IMR-90 (cell line): ENCODE measurements at regions of chr1 and their contacts with region 1.

Region 1: GRCh38 chr1:234702342-234703000 is 92.5 kb upstream of the IRF2BP2 start:
- DNase-seq: no peak
- ATAC-seq: no peak
- H3K4me3 ChIP-seq: no peak overlapping the region
- H3K27ac ChIP-seq: no peak overlapping the region
- H3K4me1 ChIP-seq: peaks cover 13% of the 10 kb centered on the region
- H3K27me3 ChIP-seq: no peaks in the 10 kb centered on the region
- CTCF ChIP-seq: no peak
- POLR2A ChIP-seq: no peak
- RAD21 ChIP-seq: no peak

Region 2: DNA sequence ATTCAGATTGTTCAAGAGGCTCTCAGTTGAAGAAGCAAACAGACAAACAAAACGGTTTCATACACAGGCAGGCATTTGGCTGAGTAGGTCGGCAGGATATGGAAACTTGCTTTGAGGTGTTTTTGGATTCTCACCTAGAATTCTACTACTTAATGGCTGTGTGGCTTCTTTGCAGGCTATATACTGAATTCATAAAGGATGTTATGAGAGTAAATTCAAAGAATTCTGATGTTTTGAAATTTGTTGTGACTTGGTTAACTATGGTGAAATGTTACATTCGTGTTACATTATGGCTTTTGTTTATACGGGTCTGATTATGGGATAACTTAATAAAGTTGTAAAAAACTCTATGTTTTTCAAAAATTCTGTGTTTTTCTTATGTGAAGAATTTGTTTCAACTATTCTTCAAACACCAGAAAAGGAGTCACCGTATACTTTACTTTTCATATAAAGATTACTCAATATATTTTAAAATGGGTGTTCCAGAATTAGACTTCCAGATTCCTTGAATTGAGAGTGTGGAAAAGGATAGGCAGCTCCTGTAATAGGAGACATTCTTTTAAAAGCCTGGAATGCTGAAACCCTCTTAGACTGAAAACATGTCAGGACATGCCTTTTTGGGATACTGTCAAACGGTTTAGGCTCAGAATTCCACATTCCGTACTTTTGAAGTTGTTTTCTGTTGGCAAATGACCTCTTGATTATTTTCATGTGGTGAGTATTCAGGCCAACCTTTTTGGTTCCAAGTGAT is 84.3 kb before region 1 on chr1:
- CTCF ChIA-PET with region 1: no interaction called
- POLR2A ChIA-PET with region 1: interaction called, 13 read pairs
- dilution Hi-C with region 1: no loop called
- in situ Hi-C with region 1: no loop called
- intact Hi-C with region 1: no loop called
- DNase-seq: peak; percentile 85
- ATAC-seq: peak; percentile 56
- H3K4me3 ChIP-seq: no peak overlapping the region
- H3K27ac ChIP-seq: peak overlapping the region; percentile 99
- H3K4me1 ChIP-seq: peaks cover 30% of the 10 kb centered on the region
- H3K27me3 ChIP-seq: no peaks in the 10 kb centered on the region
- CTCF ChIP-seq: no peak
- POLR2A ChIP-seq: no peak
- RAD21 ChIP-seq: no peak

Region 3: GRCh38 chr1:234656856-234657654 is 45.4 kb before region 1 on chr1:
- CTCF ChIA-PET with region 1: no interaction called
- POLR2A ChIA-PET with region 1: no interaction called
- dilution Hi-C with region 1: no loop called
- in situ Hi-C with region 1: no loop called
- intact Hi-C with region 1: no loop called
- DNase-seq: peak; percentile 99
- ATAC-seq: peak; percentile 75
- H3K4me3 ChIP-seq: no peak overlapping the region
- H3K27ac ChIP-seq: peak overlapping the region; percentile 54; the same call in 1 of the 2 replicates
- H3K4me1 ChIP-seq: peaks cover 22% of the 10 kb centered on the region
- H3K27me3 ChIP-seq: no peaks in the 10 kb centered on the region
- CTCF ChIP-seq: no peak; the same call in 1 of the 2 replicates
- POLR2A ChIP-seq: no peak; the same call in 1 of the 2 replicates
- RAD21 ChIP-seq: peak; percentile 42